HepG2 (cell line): ENCODE measurements at regions of chr1 and their contacts with region 1.

Region 1: DNA sequence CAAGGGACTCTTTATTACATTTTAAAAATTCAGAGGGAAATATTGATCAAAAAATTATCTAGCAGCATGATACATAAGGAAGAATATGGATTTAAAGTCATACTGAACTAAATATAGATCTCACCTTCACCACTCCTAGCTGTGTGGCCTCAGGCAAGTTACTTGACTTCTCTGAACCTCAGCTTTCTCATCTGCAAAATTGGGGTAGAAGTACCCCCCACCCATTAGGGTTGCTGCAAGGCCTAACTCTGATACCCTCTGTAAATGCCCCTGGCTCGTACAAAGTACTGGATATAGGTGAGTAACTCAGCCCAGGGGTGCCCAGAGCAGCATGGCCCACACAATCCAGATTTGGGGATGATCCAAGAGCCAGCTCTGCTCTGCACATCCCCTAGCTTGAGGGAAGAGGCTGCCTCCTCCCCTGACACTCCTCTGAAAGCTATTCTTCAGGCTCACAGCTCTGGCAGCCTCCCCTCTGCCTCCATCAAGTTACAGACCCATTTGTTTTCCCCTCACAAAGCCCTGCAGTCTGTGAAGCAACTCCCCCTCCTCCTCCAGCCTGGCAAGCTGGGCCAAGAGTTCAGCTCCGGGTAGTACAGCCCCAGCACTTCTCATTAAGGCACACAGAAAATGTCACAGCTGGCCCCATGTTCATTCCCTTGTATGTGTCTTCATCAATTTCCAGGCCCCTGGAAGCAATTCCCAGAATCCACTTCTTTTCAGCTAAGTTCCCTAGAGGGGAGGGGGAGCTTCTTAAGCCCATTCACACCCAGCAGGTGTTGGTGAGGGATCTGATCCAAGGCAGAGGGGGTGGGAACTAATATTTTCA is 143.7 kb downstream of the PLPP3 start:
- DNase-seq: peak; percentile 52
- ATAC-seq: peak; percentile 24
- H3K4me3 ChIP-seq: no peak overlapping the region
- H3K27ac ChIP-seq: peak overlapping the region; percentile 81
- H3K4me1 ChIP-seq: peaks cover 97% of the 10 kb centered on the region
- H3K27me3 ChIP-seq: no peaks in the 10 kb centered on the region
- CTCF ChIP-seq: no peak
- EP300 ChIP-seq: no peak
- POLR2A ChIP-seq: no peak
- RAD21 ChIP-seq: no peak

Region 2: DNA sequence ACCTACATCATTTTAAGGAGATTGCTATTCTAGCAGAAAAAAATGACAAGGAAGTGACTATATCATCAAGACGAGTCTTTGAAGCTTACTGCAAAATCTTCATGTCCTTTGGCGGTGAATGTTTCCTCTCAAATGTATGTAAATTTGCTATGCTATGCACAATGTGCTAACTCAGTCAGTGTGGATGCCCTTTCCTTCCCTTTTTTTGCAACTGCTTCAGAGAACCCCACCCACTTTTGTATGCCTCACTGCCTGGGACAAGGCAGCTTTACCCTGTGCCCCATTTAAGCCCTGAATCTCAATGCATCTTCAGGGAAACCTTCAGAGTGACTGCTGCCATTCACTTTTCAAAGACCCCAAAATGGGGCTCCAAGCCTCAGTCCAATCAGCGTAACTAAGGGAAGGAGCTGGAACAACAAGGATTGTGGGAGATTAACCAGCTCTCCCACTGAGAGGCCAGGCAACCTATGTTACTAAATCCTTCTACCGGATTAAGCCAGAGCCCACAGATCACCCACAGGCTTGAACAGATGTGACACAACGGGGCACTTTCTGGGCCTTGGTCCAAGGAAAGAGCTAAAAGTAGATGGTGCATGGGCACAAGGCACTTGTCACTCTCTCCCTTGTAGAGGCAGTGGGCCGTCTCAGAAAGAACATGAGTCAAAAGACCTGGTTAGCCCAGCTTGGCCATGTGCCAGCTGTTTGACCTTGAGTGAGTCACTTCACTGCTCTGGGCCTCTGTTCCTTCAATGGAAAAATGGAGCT is 10.7 kb before region 1 on chr1:
- CTCF ChIA-PET with region 1: no interaction called
- POLR2A ChIA-PET with region 1: interaction called, 14 read pairs
- in situ Hi-C with region 1: no loop called
- intact Hi-C with region 1: no loop called
- DNase-seq: peak; percentile 76
- ATAC-seq: peak; percentile 35
- H3K4me3 ChIP-seq: no peak overlapping the region
- H3K27ac ChIP-seq: no peak overlapping the region
- H3K4me1 ChIP-seq: peaks cover 39% of the 10 kb centered on the region
- H3K27me3 ChIP-seq: no peaks in the 10 kb centered on the region
- CTCF ChIP-seq: no peak
- EP300 ChIP-seq: no peak; a peak in 1 of 4 replicates
- POLR2A ChIP-seq: no peak
- RAD21 ChIP-seq: no peak

Region 3: GRCh38 chr1:56446531-56447098 is 11.0 kb after region 1 on chr1:
- CTCF ChIA-PET with region 1: no interaction called
- POLR2A ChIA-PET with region 1: interaction called, 17 read pairs
- in situ Hi-C with region 1: no loop called
- intact Hi-C with region 1: no loop called
- DNase-seq: no peak
- ATAC-seq: no peak
- H3K4me3 ChIP-seq: no peak overlapping the region
- H3K27ac ChIP-seq: peak overlapping the region; percentile 7
- H3K4me1 ChIP-seq: peaks cover 88% of the 10 kb centered on the region
- H3K27me3 ChIP-seq: no peaks in the 10 kb centered on the region
- CTCF ChIP-seq: no peak
- EP300 ChIP-seq: no peak
- POLR2A ChIP-seq: no peak
- RAD21 ChIP-seq: no peak

Region 4: DNA sequence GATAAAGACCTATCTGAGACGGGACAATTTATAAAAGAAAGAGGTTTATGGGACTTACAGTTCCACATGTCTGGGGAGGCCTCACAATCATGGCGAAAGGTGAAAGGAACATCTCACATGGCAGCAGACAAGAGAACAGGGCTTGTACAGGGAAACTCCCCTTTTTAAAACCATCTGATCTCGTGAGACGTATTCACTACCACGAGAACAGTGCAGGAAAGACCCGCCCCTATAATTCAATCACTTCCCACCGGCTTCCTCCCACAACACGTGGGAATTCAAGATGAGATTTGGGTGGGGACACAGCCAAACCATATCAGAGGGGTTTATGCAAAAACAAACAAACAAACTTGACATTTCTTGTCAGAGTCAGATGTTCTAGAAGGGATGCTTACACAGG is 54.0 kb after region 1 on chr1:
- CTCF ChIA-PET with region 1: no interaction called
- POLR2A ChIA-PET with region 1: interaction called, 11 read pairs
- in situ Hi-C with region 1: no loop called
- intact Hi-C with region 1: loop called (anchors 2 kb)
- DNase-seq: no peak
- ATAC-seq: no peak
- H3K4me3 ChIP-seq: no peak overlapping the region
- H3K27ac ChIP-seq: no peak overlapping the region
- H3K4me1 ChIP-seq: peaks cover 64% of the 10 kb centered on the region
- H3K27me3 ChIP-seq: no peaks in the 10 kb centered on the region
- CTCF ChIP-seq: no peak
- EP300 ChIP-seq: no peak
- POLR2A ChIP-seq: no peak
- RAD21 ChIP-seq: no peak